PC-9 (cell line): ENCODE measurements at regions of chr9 and their contacts with region 1.

Region 1: GRCh38 chr9:33524306-33524947 is 376 bp downstream of the ANKRD18B start:
- DNase-seq: peak in 1 of 2 experiments; percentile 2
- H3K4me3 ChIP-seq: peak overlapping the region; percentile 69
- H3K27ac ChIP-seq: no peak overlapping the region
- H3K4me1 ChIP-seq: no peaks in the 10 kb centered on the region
- H3K27me3 ChIP-seq: no peaks in the 10 kb centered on the region
- CTCF ChIP-seq: no peak

Region 2: GRCh38 chr9:33835625-33836260 is 311.3 kb after region 1 on chr9:
- CTCF ChIA-PET with region 1: no interaction called
- POLR2A ChIA-PET with region 1: interaction called, 12 read pairs
- intact Hi-C with region 1: no loop called
- DNase-seq: no peak
- H3K4me3 ChIP-seq: no peak overlapping the region
- H3K27ac ChIP-seq: peak overlapping the region; percentile 16; the same call in 1 of the 2 replicates
- H3K4me1 ChIP-seq: no peaks in the 10 kb centered on the region
- H3K27me3 ChIP-seq: no peaks in the 10 kb centered on the region
- CTCF ChIP-seq: no peak